Activated CD4-positive, alpha-beta T cell treated with anti-CD3 and anti-CD28 coated beads for 36 hours (primary cell): ENCODE measurements at regions of chr15 and their contacts with region 1.

Region 1: DNA sequence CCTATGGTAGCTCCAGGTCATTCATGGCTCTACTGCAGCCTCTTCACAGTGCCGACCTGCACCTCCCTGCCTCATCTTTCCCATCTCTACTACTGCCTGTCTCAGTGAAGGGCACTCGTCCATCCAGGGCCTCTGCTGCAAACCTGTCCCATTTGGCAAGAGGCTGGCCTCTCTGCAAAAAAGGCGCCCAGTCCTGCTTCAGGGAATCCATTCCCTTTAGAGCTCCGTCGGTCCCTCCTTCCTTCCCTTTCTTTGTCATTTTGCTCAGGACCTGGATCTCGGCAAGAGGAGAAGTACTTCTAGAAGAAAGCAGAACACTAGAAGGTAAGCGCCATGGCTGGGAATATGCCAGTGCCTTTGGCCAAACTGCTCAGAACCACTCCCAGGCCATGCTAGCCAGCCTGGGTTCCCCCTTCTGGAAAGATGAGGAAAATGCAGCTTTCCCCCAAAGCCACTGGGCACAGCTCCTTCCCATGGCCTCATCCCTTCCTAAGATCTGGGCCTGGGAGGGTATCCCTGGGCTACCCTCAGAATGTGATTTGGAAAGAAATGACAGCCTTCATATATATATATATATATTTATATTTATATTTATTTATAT is 6.4 kb upstream of the ISL2 start:
- DNase-seq: no peak
- ATAC-seq: no peak
- H3K4me3 Mint-ChIP-seq: no peak overlapping the region
- H3K27ac Mint-ChIP-seq: no peak overlapping the region
- H3K4me1 Mint-ChIP-seq: peaks cover 2% of the 10 kb centered on the region
- H3K27me3 Mint-ChIP-seq: peaks cover 37% of the 10 kb centered on the region

Region 2: DNA sequence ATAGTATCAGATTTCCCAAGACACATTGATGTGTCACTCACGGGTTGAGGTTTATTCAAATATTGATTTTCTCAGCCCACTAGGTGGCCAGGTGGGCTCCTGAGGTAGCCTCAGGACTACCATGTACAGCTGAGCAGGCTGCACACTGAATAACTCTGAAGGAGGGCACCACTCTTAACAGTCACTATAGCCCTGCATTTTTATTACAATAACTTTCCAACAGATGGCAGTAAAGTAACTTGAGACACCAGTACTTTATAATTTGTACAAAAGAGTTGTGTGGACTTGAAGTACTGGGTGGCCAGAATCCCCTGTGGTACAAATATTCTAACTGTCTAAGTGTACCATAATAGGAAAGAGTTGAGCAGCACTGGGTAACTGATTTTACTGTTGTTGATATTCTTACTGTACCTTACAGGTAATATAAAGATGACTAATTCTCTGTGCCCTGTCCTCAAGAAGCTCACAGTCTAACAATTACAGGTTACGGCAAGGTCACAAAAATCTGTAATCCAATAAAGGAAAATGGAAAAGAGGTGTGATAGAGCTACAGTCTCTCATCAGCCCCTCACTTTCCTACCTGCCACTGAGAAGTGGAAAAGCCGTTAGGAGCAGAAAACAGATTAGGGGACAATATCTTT is 94.9 kb before region 1 on chr15:
- CTCF ChIA-PET with region 1: interaction called, 5 read pairs
- POLR2A ChIA-PET with region 1: no interaction called
- intact Hi-C with region 1: loop called in 1 of 2 experiments (anchors 5 kb)
- DNase-seq: no peak
- ATAC-seq: peak; percentile 77
- H3K4me3 Mint-ChIP-seq: no peak overlapping the region
- H3K27ac Mint-ChIP-seq: no peak overlapping the region
- H3K4me1 Mint-ChIP-seq: no peaks in the 10 kb centered on the region
- H3K27me3 Mint-ChIP-seq: no peaks in the 10 kb centered on the region

Region 3: GRCh38 chr15:76366714-76367113 is 36.5 kb after region 1 on chr15:
- CTCF ChIA-PET with region 1: no interaction called
- POLR2A ChIA-PET with region 1: no interaction called
- intact Hi-C with region 1: no loop called
- DNase-seq: no peak
- ATAC-seq: no peak
- H3K4me3 Mint-ChIP-seq: no peak overlapping the region
- H3K27ac Mint-ChIP-seq: no peak overlapping the region
- H3K4me1 Mint-ChIP-seq: no peaks in the 10 kb centered on the region
- H3K27me3 Mint-ChIP-seq: no peaks in the 10 kb centered on the region

Region 4: GRCh38 chr15:76625267-76625666 is 295.1 kb after region 1 on chr15:
- CTCF ChIA-PET with region 1: no interaction called
- POLR2A ChIA-PET with region 1: no interaction called
- intact Hi-C with region 1: no loop called
- DNase-seq: no peak
- ATAC-seq: no peak
- H3K4me3 Mint-ChIP-seq: no peak overlapping the region
- H3K27ac Mint-ChIP-seq: no peak overlapping the region
- H3K4me1 Mint-ChIP-seq: no peaks in the 10 kb centered on the region
- H3K27me3 Mint-ChIP-seq: no peaks in the 10 kb centered on the region